Activated T-helper 2 cell treated with anti-CD3 and anti-CD28 coated beads, Interferon-gamma antibody, Interleukin-2, Interleukin-4, amounts not matched to agents 10 μg/mL and 5 μg/mL and 100 μg/mL, durations not matched to agents 14 hours and 24 hours and 36 hours (primary cell): ENCODE measurements at regions of chr11 and their contacts with region 1.

Region 1: DNA sequence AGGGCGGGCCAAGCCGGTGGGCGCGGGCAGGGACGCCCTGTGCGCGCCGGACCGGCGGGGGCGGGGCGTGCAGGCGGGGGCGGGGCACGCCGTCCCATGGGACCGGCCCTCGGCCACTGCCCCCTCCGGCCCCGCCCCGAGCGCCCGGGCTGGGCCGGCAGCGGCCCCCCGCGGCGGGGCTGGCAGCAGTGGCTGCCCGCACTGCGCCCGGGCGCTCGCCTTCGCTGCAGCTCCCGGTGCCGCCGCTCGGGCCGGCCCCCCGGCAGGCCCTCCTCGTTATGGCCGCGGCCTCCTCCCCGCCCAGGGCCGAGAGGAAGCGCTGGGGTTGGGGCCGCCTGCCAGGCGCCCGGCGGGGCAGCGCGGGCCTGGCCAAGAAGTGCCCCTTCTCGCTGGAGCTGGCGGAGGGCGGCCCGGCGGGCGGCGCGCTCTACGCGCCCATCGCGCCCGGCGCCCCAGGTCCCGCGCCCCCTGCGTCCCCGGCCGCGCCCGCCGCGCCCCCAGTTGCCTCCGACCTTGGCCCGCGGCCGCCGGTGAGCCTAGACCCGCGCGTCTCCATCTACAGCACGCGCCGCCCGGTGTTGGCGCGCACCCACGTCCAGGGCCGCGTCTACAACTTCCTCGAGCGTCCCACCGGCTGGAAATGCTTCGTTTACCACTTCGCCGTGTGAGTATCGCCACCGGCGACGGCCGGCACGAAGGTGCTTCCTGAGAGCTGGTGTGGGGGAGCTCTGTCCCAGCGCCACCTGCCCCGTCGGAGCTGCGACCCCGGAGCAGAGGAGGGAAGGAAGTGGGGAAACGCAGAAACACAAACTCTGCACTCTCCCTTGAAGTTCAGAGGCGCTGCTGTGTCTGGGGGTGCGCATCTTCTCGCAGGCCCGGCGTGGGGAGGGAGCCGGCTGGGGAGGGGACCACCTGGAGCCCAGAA is at the start of gene KCNQ1:
- DNase-seq: peak; percentile 40
- H3K4me3 Mint-ChIP-seq: peak within 1 kb of the TSS; percentile 82
- H3K27ac Mint-ChIP-seq: no peak within 1 kb of the TSS
- H3K4me1 Mint-ChIP-seq: peaks cover 18% of the 10 kb centered on the region
- H3K27me3 Mint-ChIP-seq: peaks cover 12% of the 10 kb centered on the region
- total RNA-seq, gene KCNQ1: 3.4 and 4.0 TPM in 2 replicates

Region 2: GRCh38 chr11:2377511-2378443 is 67.3 kb before region 1 on chr11:
- intact Hi-C with region 1: loop called (anchors 2 kb)
- DNase-seq: peak; percentile 41
- H3K4me3 Mint-ChIP-seq: peak overlapping the region; percentile 86
- H3K27ac Mint-ChIP-seq: peak overlapping the region; percentile 87
- H3K4me1 Mint-ChIP-seq: peaks cover 15% of the 10 kb centered on the region
- H3K27me3 Mint-ChIP-seq: peaks cover 2% of the 10 kb centered on the region

Region 3: GRCh38 chr11:2791521-2792380 is 346.7 kb after region 1 on chr11:
- intact Hi-C with region 1: no loop called
- DNase-seq: no peak
- H3K4me3 Mint-ChIP-seq: peak overlapping the region; percentile 13
- H3K27ac Mint-ChIP-seq: no peak overlapping the region
- H3K4me1 Mint-ChIP-seq: no peaks in the 10 kb centered on the region
- H3K27me3 Mint-ChIP-seq: peaks cover 3% of the 10 kb centered on the region